ENCODE measurements at regions of chr12 and their contacts with region 1.

Region 1: DNA sequence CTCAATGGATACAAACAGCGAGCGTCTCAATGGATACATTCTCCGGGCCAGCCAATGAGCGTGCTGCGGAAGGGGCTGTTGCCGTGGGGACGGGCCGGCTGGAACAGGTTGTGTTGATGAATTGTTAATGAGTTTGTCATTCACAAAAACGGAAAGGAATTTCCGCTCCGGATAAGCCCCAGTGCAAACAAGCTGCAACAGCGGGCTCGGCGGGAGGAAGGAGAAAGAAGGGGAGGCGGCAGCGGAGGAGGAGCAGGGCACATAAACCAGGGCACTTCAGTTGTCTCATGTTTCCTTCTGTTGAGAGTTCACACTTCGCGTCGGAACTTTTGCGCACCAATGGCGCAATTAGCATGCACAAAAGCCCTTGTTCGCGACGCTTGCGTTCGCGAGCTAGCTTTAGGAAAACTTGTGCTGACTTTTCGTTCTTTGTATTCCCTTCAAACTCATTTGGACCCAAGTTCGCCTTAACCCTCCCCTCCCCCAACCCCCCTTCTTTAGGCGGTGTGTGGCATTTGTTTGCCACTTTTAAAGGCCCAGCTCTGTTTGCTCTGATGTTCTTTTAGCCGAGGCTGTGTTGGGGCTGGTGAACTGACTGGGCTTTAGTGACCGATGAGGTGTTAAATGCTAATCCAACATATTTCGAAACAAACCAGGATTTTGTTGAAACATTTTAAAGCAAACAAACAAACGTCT is at the start of gene DUSP6:
- DNase-seq: peak; percentile 90
- ATAC-seq: peak; percentile 78
- H3K4me3 Mint-ChIP-seq: peak within 1 kb of the TSS; percentile 98
- H3K27ac Mint-ChIP-seq: peak within 1 kb of the TSS; percentile 97
- H3K4me1 Mint-ChIP-seq: peaks cover 36% of the 10 kb centered on the region
- H3K27me3 Mint-ChIP-seq: no peaks in the 10 kb centered on the region
- total RNA-seq, gene DUSP6: 77.5 to 85.0 TPM

Region 2: DNA sequence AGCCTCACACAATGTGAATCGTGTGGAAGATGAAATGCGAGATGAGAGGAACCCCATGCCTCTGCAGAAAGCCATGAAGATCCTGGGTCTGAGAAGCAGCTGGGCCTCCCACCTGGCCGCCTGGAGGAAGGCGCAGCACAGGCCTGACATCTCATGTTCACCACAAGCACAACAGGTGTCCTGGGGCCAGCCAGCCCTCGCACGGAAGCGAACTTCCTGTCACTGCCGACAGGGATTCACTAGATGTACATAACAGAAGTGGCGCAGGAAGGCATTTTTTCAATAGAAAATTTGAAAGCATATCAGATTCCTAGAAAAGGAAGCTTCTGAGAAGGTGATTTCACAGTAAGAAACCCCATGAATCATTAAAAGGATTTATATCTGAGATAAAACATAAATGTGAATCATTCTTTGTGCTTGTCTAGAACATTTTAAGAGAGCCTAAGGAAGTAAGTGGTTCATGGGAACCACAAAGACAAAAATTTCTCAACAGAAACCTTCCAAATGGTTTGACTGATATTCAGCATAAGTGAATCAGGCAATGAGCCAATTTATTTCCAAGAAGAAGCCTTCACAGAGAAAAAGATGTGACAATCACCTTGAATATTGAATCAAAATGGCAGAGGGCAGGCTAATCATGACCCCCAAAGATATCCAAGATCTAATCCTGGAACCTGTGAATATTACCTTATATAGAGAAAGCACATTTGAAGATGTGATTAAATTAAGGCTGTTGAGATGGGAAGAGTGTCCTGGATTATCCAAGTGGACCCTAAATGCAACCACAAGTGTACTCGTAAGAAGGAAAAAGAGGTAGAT is 312.3 kb before region 1 on chr12:
- POLR2A ChIA-PET with region 1: interaction called, 31 read pairs
- DNase-seq: peak; percentile 80
- ATAC-seq: peak; percentile 98
- H3K4me3 Mint-ChIP-seq: peak overlapping the region; percentile 55
- H3K27ac Mint-ChIP-seq: peak overlapping the region; percentile 92
- H3K4me1 Mint-ChIP-seq: peaks cover 63% of the 10 kb centered on the region
- H3K27me3 Mint-ChIP-seq: no peaks in the 10 kb centered on the region

Region 3: GRCh38 chr12:89244536-89244935 is 108.1 kb before region 1 on chr12:
- POLR2A ChIA-PET with region 1: interaction called, 151 read pairs
- DNase-seq: no peak
- ATAC-seq: peak; percentile 78
- H3K4me3 Mint-ChIP-seq: peak overlapping the region; percentile 62
- H3K27ac Mint-ChIP-seq: peak overlapping the region; percentile 88
- H3K4me1 Mint-ChIP-seq: peaks cover 39% of the 10 kb centered on the region
- H3K27me3 Mint-ChIP-seq: no peaks in the 10 kb centered on the region

Region 4: DNA sequence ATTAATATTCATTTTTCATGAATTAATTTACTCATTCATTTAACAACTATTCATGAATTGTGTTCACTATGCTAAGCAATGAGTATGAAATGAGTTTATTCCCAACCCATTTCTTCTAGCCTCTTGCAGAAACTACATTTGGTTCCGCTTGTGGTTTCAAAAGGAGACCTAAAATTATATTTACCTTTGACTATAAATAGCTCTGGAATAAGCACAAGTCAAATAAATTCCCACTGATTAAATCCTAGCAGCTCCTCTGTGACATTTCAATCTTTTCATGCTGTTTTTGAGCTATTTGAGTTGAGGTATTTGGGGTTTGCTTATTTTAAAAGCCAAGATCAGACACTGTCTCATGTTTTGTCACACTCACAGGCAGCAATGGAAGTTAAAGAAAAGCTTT is 47.3 kb before region 1 on chr12:
- POLR2A ChIA-PET with region 1: no interaction called
- DNase-seq: no peak
- ATAC-seq: no peak
- H3K4me3 Mint-ChIP-seq: no peak overlapping the region
- H3K27ac Mint-ChIP-seq: no peak overlapping the region
- H3K4me1 Mint-ChIP-seq: peaks cover 30% of the 10 kb centered on the region
- H3K27me3 Mint-ChIP-seq: no peaks in the 10 kb centered on the region

Region 5: DNA sequence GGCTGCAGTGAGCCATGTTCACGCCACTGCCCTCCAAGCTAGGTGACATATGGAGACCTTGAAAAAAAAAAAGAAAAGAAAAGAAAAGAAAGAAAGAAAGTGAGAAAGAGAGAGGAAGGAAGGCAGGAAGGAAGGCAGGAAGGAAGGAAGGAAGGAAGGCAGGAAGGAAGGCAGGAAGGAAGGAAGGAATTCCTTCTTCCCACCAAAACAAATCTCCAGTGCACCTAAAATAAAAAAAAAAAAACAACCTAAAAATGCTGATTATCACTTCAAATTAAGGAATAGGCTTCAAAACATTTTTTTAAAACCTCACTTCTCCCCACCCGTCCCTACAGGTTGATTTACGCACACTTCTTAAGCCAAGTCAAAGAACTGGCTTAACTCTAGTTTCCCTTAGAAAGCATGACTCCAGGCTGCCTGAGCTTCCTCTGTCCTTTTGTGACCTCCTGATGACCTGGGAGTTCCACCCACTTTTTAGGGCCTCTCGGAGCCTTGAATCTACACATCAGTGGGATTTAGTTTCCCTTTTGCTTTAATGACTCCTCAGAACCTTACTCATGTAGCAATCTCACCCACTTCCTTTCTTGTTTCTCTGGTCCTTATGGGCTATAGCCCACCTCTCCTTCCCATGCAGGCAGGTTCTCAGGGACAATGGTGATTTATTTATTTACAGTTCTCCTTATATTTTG is 18.9 kb before region 1 on chr12:
- POLR2A ChIA-PET with region 1: interaction called, 14 read pairs
- DNase-seq: no peak
- ATAC-seq: peak; percentile 98
- H3K4me3 Mint-ChIP-seq: peak overlapping the region; percentile 75
- H3K27ac Mint-ChIP-seq: peak overlapping the region; percentile 62
- H3K4me1 Mint-ChIP-seq: peaks cover 18% of the 10 kb centered on the region
- H3K27me3 Mint-ChIP-seq: no peaks in the 10 kb centered on the region

Region 6: DNA sequence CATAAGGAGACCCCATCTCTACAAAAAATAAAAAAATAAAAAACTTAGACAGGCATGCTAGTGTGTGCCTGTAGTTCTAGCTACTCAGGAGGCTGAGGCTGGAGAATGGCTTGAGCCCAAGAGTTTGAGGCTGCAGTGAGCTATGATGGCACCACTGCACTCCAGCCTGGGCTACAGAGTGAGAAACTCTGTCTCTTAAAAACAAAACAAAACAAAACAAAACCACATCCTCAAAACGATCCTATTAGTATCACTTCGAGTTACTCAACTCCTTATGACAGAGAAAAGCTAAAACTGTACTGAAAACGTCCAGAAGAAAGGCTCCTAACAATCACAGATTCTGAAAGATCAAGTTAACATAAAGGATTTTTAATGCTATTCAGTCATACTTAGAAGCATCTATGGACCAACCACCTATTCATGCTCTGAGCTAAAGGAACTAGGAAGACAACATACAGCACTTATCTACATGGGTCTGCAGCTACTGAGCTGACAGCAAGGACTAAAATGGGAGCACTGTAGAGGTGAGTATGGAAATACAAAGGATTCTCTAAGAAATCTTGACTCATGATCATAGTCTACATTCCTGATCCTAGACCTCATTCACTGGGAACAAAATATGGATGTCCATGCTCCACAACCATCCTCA is 75.0 kb after region 1 on chr12:
- POLR2A ChIA-PET with region 1: interaction called, 14 read pairs
- DNase-seq: no peak
- ATAC-seq: peak; percentile 88
- H3K4me3 Mint-ChIP-seq: peak overlapping the region; percentile 60
- H3K27ac Mint-ChIP-seq: peak overlapping the region; percentile 84
- H3K4me1 Mint-ChIP-seq: peaks cover 17% of the 10 kb centered on the region
- H3K27me3 Mint-ChIP-seq: no peaks in the 10 kb centered on the region

Region 7: DNA sequence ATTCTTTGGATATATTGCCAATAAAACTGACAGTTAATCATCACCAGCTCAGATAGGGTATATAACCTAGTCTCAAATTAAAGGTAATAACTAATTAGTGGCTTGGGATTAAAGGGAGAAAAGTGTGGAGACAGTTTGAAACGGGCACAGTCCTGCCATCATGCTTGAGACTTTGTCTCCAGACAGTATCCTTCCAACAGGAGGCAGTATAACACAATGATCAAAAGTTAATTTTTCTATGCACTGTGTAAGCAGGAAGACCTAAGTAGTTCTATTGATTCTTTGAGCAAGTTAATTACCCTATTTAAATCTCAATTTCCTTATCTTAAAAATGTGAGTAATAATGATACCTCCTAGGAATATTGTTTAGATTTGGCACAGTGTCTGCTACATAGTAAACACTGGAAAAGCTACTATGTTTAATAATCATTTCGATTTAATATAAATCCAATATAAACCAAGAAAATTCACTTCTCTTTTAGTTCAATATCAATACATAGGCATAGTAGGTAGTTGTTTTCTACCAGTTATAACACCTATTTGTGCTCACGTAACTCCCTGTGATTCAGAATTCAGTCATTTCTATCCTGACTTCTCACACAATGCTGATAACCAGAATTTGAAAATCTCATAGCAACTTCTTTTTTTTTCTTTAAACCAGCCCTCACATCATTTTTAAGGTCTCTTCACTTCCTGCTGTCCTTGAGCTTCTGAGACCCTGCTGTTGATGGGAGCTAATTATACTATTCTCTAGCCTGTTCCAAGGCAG is 118.3 kb after region 1 on chr12:
- POLR2A ChIA-PET with region 1: interaction called, 54 read pairs
- DNase-seq: no peak
- ATAC-seq: peak; percentile 45
- H3K4me3 Mint-ChIP-seq: peak overlapping the region; percentile 41
- H3K27ac Mint-ChIP-seq: peak overlapping the region; percentile 50
- H3K4me1 Mint-ChIP-seq: peaks cover 62% of the 10 kb centered on the region
- H3K27me3 Mint-ChIP-seq: no peaks in the 10 kb centered on the region

Region 8: DNA sequence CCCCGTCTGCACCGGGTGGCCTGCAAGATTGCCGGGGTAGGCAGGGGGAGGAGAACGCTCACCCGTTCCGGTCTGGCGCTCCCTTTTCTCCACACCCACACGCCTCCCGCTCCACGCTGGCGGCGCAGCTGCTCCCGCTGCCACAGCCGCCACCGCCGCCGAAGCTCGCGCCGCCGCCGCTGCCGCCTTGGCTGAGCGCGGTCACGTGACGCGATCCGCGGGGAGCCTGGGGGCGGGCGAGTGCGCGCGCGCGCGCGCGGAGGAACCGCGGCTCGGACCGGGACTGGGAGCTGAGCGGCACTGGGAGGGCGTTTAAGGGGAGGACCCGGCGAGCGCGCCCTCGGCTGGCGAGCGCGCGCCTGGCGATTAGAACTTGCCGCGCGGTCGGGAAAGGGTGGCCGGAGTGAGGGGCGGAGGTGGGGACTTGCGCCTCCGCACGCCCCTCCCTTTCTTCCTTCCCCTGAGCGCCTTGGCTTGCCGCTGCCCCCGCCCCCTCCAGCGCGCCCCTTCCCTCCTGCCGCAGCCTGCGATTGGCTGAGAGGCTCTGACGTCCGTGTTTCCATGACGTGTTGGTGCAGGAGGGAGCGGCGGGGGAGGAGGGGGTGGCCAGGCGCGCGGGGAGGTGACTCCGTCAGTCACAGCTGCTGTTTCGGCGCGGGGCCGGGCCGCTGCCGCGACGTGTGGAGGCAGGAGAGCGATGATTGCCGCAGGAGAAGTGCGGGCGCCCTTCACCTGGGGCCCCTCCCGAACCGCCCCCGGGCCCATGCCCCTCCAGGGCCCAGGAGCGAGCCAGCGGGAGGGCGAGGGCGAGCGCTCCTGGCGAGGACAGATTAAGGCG is 356.7 kb after region 1 on chr12:
- POLR2A ChIA-PET with region 1: interaction called, 11 read pairs
- DNase-seq: peak; percentile 97
- ATAC-seq: peak; percentile 80
- H3K4me3 Mint-ChIP-seq: peak overlapping the region; percentile 83
- H3K27ac Mint-ChIP-seq: peak overlapping the region; percentile 83
- H3K4me1 Mint-ChIP-seq: peaks cover 21% of the 10 kb centered on the region
- H3K27me3 Mint-ChIP-seq: peaks cover 13% of the 10 kb centered on the region